ENCODE measurements at regions of chr14 and their contacts with region 1.

Region 1: DNA sequence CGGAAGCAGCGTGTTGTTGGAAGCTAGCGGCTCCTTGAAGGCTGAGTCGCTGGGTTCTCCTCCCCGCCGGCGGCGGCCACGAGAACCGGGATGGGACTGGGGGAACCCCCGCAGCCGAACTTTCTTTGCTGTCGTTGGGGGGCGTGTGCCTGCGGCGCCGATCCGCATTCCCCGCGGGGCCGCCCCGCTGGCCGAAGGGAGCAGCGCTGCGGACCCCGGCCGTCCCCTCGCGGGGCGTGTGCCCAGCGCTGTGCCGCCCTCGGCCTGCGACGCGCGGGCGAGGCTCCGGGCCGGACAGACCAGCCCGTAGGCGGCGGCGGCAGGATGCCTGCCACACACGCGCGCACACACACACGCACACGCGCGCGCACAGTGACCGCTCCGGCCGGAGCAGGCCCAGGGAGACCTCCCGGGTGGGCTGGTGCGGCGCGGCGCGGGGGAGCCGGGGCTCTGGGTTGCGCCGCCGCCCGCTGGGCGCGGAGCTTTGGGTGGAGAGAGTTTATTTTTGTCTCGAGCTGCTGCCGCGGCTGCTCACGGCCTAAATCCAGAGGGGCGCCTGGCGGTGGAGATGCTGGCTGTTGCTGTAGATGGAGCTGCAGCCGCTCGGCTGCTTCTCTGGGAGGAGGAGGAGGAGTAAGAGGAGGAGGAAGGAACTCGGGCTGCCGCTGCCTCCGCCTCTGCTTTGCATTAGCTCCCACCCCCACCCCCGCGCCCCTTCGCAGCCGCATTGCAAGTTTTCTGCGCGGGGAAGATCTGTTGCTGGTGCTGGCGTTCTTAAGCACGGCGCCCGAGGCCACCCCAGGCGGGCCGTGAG is at the start of gene SAMD4A:
- DNase-seq: peak; percentile 85 to 91 (median 87)
- ATAC-seq: peak; percentile 41 to 65 (median 52)
- H3K4me3 ChIP-seq: peak within 1 kb of the TSS; percentile 58 to 91 (median 76)
- H3K27ac ChIP-seq: peak within 1 kb of the TSS; percentile 90 to 100 (median 99)
- H3K4me1 ChIP-seq: peaks cover 0 to 51% (median 32%) of the 10 kb centered on the region in 12 donors
- H3K27me3 ChIP-seq: no peaks in the 10 kb centered on the region
- CTCF ChIP-seq: peak in 11 of 12 donors; percentile 18 to 58 (median 34)
- POLR2A ChIP-seq: peak in 1 of 2 donors; percentile 44
- total RNA-seq, gene SAMD4A: 95.7 to 247 (median 159) TPM

Region 2: DNA sequence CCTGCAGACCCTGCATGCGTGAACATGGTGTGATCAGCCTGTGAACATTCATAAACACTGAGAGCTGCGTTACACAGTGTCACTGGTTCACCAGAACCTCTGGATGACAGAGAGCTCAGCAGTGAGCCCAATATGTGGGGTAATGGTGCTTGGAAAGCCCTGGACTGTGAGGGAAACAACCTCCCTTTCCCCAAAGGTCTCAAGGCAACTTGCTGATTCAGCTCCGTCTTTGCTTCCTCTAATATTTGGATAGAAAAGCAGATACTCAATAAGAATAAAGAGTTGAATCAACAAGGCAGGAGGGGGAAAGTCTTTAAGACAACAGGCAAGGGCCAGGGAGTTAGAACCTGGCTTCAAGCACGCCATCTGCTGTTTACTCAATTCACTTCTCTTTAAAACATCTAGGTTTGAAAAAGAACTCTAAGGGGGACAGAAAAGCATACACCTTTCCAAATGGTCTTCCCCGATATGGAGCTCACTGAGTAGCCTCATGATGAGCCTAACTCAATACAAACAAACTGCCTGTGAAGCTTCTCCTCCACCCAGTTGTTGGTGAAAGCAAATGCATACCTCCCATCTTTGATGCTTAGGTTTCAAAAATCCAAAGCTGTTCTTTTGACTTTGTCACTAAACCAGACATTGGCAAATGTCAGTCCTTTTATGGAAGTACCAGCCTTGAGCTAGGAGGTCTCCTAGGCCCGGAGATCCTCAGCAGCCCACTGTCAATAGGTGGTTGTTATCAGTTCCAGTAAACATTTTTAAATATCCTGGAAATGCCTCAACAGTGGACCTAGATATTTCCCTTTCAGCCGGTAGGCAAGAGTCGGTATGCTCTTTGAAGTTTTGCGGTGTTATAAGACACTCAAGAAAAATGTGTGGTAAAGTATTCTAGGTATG is 76.4 kb after region 1 on chr14:
- intact Hi-C with region 1: loop called in 4 of 10 experiments (anchors 5 to 10 kb)
- DNase-seq: no peak
- ATAC-seq: peak in 1 of 4 donors; percentile 14
- H3K4me3 ChIP-seq: no peak overlapping the region
- H3K27ac ChIP-seq: peak overlapping the region in 4 of 12 donors; percentile 9 to 48 (median 23)
- H3K4me1 ChIP-seq: peaks cover 3 to 73% (median 39%) of the 10 kb centered on the region in 12 donors
- H3K27me3 ChIP-seq: no peaks in the 10 kb centered on the region
- CTCF ChIP-seq: peak in 5 of 12 donors; percentile 14 to 43 (median 25)
- POLR2A ChIP-seq: no peak

Region 3: GRCh38 chr14:54691525-54692283 is 125.1 kb after region 1 on chr14:
- intact Hi-C with region 1: loop called (anchors 1 to 5 kb)
- DNase-seq: peak; percentile 80 to 86 (median 84)
- ATAC-seq: peak; percentile 67 to 82 (median 74)
- H3K4me3 ChIP-seq: no peak overlapping the region
- H3K27ac ChIP-seq: peak overlapping the region; percentile 44 to 94 (median 70)
- H3K4me1 ChIP-seq: peaks cover 3 to 81% (median 48%) of the 10 kb centered on the region in 12 donors
- H3K27me3 ChIP-seq: no peaks in the 10 kb centered on the region
- CTCF ChIP-seq: peak; percentile 84 to 92 (median 88)
- POLR2A ChIP-seq: no peak

Region 4: DNA sequence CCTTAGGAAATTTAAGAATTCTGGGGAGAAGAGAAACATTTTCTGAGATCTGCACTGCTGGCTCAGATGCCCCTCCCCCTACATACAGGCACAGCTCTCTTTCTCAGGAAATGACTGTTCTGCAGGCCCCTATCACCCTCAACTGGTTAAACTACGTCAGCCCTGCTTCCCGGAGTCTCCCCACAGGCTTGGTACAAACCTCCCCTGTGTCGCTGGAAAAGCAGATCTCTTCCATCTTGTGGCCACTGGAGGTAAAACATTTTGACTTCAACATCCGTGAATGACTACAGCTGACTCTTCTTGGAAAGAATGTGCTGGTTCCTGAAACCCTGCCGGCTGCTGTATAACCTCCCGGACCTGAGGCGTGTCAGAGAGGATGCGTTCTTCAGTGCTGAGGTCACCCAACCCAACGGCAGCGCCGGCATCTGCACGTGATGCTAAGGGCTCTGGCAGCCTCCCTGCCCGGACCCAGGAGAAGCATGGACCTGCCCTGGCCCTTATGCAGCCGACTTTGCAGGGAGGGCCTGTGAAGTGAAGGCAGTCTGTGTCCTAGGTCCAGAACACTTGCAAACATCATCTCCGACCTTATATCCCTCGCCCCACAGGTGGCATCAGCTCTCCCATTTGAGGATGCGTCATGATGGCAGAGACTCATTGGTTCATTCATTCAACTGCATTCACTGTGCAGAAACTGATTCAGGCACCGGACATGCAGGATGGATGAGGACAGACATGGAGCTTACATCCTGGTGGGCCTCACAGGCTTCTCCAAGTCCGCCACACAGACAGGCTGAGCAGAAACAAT is 206.8 kb after region 1 on chr14:
- intact Hi-C with region 1: loop called (anchors 1 to 2 kb)
- DNase-seq: peak; percentile 84 to 94 (median 88)
- ATAC-seq: peak; percentile 78 to 89 (median 87)
- H3K4me3 ChIP-seq: peak overlapping the region in 4 of 12 donors; percentile 3 to 25 (median 9)
- H3K27ac ChIP-seq: peak overlapping the region; percentile 31 to 96 (median 91)
- H3K4me1 ChIP-seq: peaks cover 0 to 93% (median 62%) of the 10 kb centered on the region in 12 donors
- H3K27me3 ChIP-seq: no peaks in the 10 kb centered on the region
- CTCF ChIP-seq: peak; percentile 47 to 76 (median 64)
- POLR2A ChIP-seq: peak in 1 of 2 donors; percentile 28

Region 5: DNA sequence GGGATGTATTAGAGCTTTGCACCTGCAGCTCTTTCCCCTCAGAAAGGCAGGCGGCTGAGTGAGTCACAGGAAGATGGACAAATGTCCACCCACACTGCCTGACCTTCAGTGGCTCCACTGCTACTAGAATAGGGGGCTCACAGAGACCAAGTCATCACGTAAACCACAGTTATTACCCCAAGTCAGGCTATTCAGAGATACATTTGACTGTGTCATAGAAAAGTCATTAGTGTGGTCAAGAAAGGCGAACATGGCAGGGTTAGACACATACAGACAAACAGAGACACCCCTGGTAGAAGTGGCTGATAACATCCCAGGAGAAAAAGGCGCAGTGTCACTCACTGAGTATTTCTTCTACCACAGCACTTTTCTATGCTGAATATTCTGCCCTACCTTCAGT is 300.0 kb after region 1 on chr14:
- intact Hi-C with region 1: no loop called
- DNase-seq: no peak
- ATAC-seq: no peak
- H3K4me3 ChIP-seq: no peak overlapping the region
- H3K27ac ChIP-seq: no peak overlapping the region
- H3K4me1 ChIP-seq: peaks cover 0 to 41% (median 6%) of the 10 kb centered on the region in 12 donors
- H3K27me3 ChIP-seq: no peaks in the 10 kb centered on the region
- CTCF ChIP-seq: no peak
- POLR2A ChIP-seq: no peak

Region 6: GRCh38 chr14:54893151-54893760 is 326.6 kb after region 1 on chr14:
- intact Hi-C with region 1: loop called in 6 of 10 experiments (anchors 5 to 10 kb)
- DNase-seq: no peak
- ATAC-seq: peak in 2 of 4 donors; percentile 45 to 46
- H3K4me3 ChIP-seq: no peak overlapping the region
- H3K27ac ChIP-seq: no peak overlapping the region
- H3K4me1 ChIP-seq: peaks cover 0 to 26% (median 0%) of the 10 kb centered on the region in 12 donors
- H3K27me3 ChIP-seq: no peaks in the 10 kb centered on the region
- CTCF ChIP-seq: peak; percentile 65 to 84 (median 77)
- POLR2A ChIP-seq: no peak

Region 7: GRCh38 chr14:54981698-54982097 is 415.1 kb after region 1 on chr14:
- intact Hi-C with region 1: loop called in 1 of 10 experiments (anchors 10 kb)
- DNase-seq: no peak
- ATAC-seq: no peak
- H3K4me3 ChIP-seq: no peak overlapping the region
- H3K27ac ChIP-seq: no peak overlapping the region
- H3K4me1 ChIP-seq: peaks cover 0 to 6% (median 0%) of the 10 kb centered on the region in 12 donors
- H3K27me3 ChIP-seq: no peaks in the 10 kb centered on the region
- CTCF ChIP-seq: peak in 8 of 12 donors; percentile 13 to 47 (median 38)
- POLR2A ChIP-seq: no peak